ENCODE measurements at regions of chr20 and their contacts with region 1.

Region 1: GRCh38 chr20:47379433-47380150 is 23.1 kb upstream of the ZMYND8 start:
- DNase-seq: no peak
- H3K4me3 Mint-ChIP-seq: no peak overlapping the region
- H3K27ac Mint-ChIP-seq: no peak overlapping the region
- H3K4me1 Mint-ChIP-seq: peaks cover 28% of the 10 kb centered on the region
- H3K27me3 Mint-ChIP-seq: peaks cover 26% of the 10 kb centered on the region

Region 2: GRCh38 chr20:46731770-46732169 is 647.8 kb before region 1 on chr20:
- CTCF ChIA-PET with region 1: no interaction called
- DNase-seq: no peak
- H3K4me3 Mint-ChIP-seq: no peak overlapping the region
- H3K27ac Mint-ChIP-seq: no peak overlapping the region
- H3K4me1 Mint-ChIP-seq: no peaks in the 10 kb centered on the region
- H3K27me3 Mint-ChIP-seq: peaks cover 5% of the 10 kb centered on the region

Region 3: GRCh38 chr20:47220161-47220582 is 159.4 kb before region 1 on chr20:
- CTCF ChIA-PET with region 1: interaction called, 30 read pairs
- DNase-seq: peak; percentile 62
- H3K4me3 Mint-ChIP-seq: no peak overlapping the region
- H3K27ac Mint-ChIP-seq: no peak overlapping the region
- H3K4me1 Mint-ChIP-seq: peaks cover 22% of the 10 kb centered on the region
- H3K27me3 Mint-ChIP-seq: no peaks in the 10 kb centered on the region

Region 4: GRCh38 chr20:47272893-47273590 is 106.5 kb before region 1 on chr20:
- CTCF ChIA-PET with region 1: interaction called, 403 read pairs
- DNase-seq: peak; percentile 53
- H3K4me3 Mint-ChIP-seq: no peak overlapping the region
- H3K27ac Mint-ChIP-seq: no peak overlapping the region
- H3K4me1 Mint-ChIP-seq: peaks cover 24% of the 10 kb centered on the region
- H3K27me3 Mint-ChIP-seq: no peaks in the 10 kb centered on the region

Region 5: GRCh38 chr20:47304287-47304686 is 75.3 kb before region 1 on chr20:
- CTCF ChIA-PET with region 1: interaction called, 13 read pairs
- DNase-seq: no peak
- H3K4me3 Mint-ChIP-seq: no peak overlapping the region
- H3K27ac Mint-ChIP-seq: no peak overlapping the region
- H3K4me1 Mint-ChIP-seq: peaks cover 30% of the 10 kb centered on the region
- H3K27me3 Mint-ChIP-seq: no peaks in the 10 kb centered on the region

Region 6: DNA sequence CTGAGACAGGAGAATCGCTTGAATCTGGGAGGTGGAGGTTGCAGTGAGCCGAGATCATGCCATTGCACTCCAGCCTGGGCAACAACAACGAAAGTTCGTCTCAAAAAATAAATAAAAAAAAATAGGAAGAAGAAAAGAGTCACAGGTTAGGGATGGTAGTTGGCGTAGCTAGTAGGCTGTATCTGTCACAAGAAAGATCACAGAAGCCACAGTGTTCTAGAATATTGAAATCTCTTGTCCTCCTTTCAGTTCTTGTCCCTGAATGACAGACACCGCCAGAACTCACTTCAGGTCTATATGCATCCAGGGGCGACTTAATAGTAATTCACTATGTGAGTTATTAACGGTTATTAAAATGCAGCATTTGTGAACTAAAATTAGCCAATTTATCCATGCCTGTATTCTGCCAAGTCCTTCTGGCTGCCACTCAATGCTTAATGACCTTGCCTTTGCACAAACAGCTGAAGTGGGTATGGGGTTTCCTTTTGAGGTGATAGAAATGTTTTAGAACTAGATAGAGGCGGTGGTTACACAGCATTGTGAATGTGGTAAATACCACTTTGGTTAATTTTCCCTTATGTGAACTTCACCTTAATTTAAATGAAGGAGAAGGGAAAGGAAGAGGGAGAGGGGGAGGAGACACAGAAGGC is 18.2 kb after region 1 on chr20:
- CTCF ChIA-PET with region 1: interaction called, 12 read pairs
- DNase-seq: no peak
- H3K4me3 Mint-ChIP-seq: no peak overlapping the region
- H3K27ac Mint-ChIP-seq: no peak overlapping the region
- H3K4me1 Mint-ChIP-seq: peaks cover 5% of the 10 kb centered on the region
- H3K27me3 Mint-ChIP-seq: no peaks in the 10 kb centered on the region

Region 7: GRCh38 chr20:47423586-47423985 is 44.0 kb after region 1 on chr20:
- CTCF ChIA-PET with region 1: no interaction called
- DNase-seq: no peak
- H3K4me3 Mint-ChIP-seq: no peak overlapping the region
- H3K27ac Mint-ChIP-seq: no peak overlapping the region
- H3K4me1 Mint-ChIP-seq: no peaks in the 10 kb centered on the region
- H3K27me3 Mint-ChIP-seq: no peaks in the 10 kb centered on the region

Measured in activated naive CD4-positive, alpha-beta T cell treated with anti-CD3 and anti-CD28 coated beads, Interleukin-2, amount 10 ng/mL, durations not matched to agents 7 days and 5 days (primary cell).